ENCODE measurements at regions of chr1 and their contacts with region 1.

Region 1: GRCh38 chr1:150268705-150269403 is at the start of gene APH1A:
- DNase-seq: peak; percentile 92
- H3K4me3 ChIP-seq: peak within 1 kb of the TSS; percentile 85 to 97 (median 95)
- H3K4me3 Mint-ChIP-seq: peak within 1 kb of the TSS; percentile 98 to 99
- H3K27ac ChIP-seq: peak within 1 kb of the TSS; percentile 89 to 98
- H3K27ac Mint-ChIP-seq: peak within 1 kb of the TSS; percentile 97 to 99 (median 98)
- H3K4me1 ChIP-seq: peaks cover 35 to 54% of the 10 kb centered on the region in 2 donors
- H3K4me1 Mint-ChIP-seq: peaks cover 56% of the 10 kb centered on the region
- H3K27me3 ChIP-seq: no peaks in the 10 kb centered on the region
- H3K27me3 Mint-ChIP-seq: peaks cover 0 to 6% (median 2%) of the 10 kb centered on the region in 3 donors
- CTCF ChIP-seq: no peak
- polyA plus RNA-seq, gene APH1A: 83.7 to 134 (median 83.9) TPM

Region 2: GRCh38 chr1:150192012-150192411 is 76.8 kb before region 1 on chr1:
- intact Hi-C with region 1: no loop called
- DNase-seq: no peak
- H3K4me3 ChIP-seq: no peak overlapping the region
- H3K4me3 Mint-ChIP-seq: no peak overlapping the region
- H3K27ac ChIP-seq: no peak overlapping the region
- H3K27ac Mint-ChIP-seq: no peak overlapping the region
- H3K4me1 ChIP-seq: peaks cover 10 to 11% of the 10 kb centered on the region in 2 donors
- H3K4me1 Mint-ChIP-seq: peaks cover 10% of the 10 kb centered on the region
- H3K27me3 ChIP-seq: no peaks in the 10 kb centered on the region
- H3K27me3 Mint-ChIP-seq: peaks cover 1 to 2% (median 2%) of the 10 kb centered on the region in 3 donors
- CTCF ChIP-seq: no peak

Region 3: GRCh38 chr1:150321826-150322166 is 52.9 kb after region 1 on chr1:
- intact Hi-C with region 1: loop called in 1 of 2 experiments (anchors 2 kb)
- DNase-seq: peak in 2 of 3 donors; percentile 0 to 22
- H3K4me3 ChIP-seq: peak overlapping the region; percentile 86 to 94 (median 93)
- H3K4me3 Mint-ChIP-seq: peak overlapping the region; percentile 99 to 100
- H3K27ac ChIP-seq: peak overlapping the region; percentile 92 to 93
- H3K27ac Mint-ChIP-seq: peak overlapping the region; percentile 99 to 100 (median 100)
- H3K4me1 ChIP-seq: peaks cover 21% of the 10 kb centered on the region in 2 donors
- H3K4me1 Mint-ChIP-seq: peaks cover 19% of the 10 kb centered on the region
- H3K27me3 ChIP-seq: no peaks in the 10 kb centered on the region
- H3K27me3 Mint-ChIP-seq: no peaks in the 10 kb centered on the region
- CTCF ChIP-seq: no peak

Region 4: GRCh38 chr1:150552093-150552691 is 283.3 kb after region 1 on chr1:
- intact Hi-C with region 1: loop called in 1 of 2 experiments (anchors 10 kb)
- DNase-seq: peak; percentile 93 to 95 (median 95)
- H3K4me3 ChIP-seq: peak overlapping the region in 2 of 3 experiments; percentile 23 to 86
- H3K4me3 Mint-ChIP-seq: peak overlapping the region; percentile 64 to 95
- H3K27ac ChIP-seq: peak overlapping the region; percentile 80 to 82
- H3K27ac Mint-ChIP-seq: peak overlapping the region; percentile 94 to 99 (median 97)
- H3K4me1 ChIP-seq: peaks cover 61 to 62% of the 10 kb centered on the region in 2 donors
- H3K4me1 Mint-ChIP-seq: peaks cover 57% of the 10 kb centered on the region
- H3K27me3 ChIP-seq: no peaks in the 10 kb centered on the region
- H3K27me3 Mint-ChIP-seq: peaks cover 0 to 6% (median 2%) of the 10 kb centered on the region in 3 donors
- CTCF ChIP-seq: no peak

Region 5: GRCh38 chr1:150674881-150675280 is 406.0 kb after region 1 on chr1:
- intact Hi-C with region 1: no loop called
- DNase-seq: no peak
- H3K4me3 ChIP-seq: no peak overlapping the region
- H3K4me3 Mint-ChIP-seq: no peak overlapping the region
- H3K27ac ChIP-seq: no peak overlapping the region
- H3K27ac Mint-ChIP-seq: peak overlapping the region in 1 of 7 donors; percentile 32
- H3K4me1 ChIP-seq: no peaks in the 10 kb centered on the region
- H3K4me1 Mint-ChIP-seq: peaks cover 3% of the 10 kb centered on the region
- H3K27me3 ChIP-seq: no peaks in the 10 kb centered on the region
- H3K27me3 Mint-ChIP-seq: no peaks in the 10 kb centered on the region
- CTCF ChIP-seq: no peak

Measured in CD14-positive monocyte (primary cell).